ENCODE measurements at regions of chr7 and their contacts with region 1.

Region 1: GRCh38 chr7:74401137-74401859 is 52.4 kb upstream of the GTF2IRD1 start:
- DNase-seq: peak; percentile 59 to 93
- H3K4me3 ChIP-seq: no peak overlapping the region
- CTCF ChIP-seq: peak in 2 of 3 donors; percentile 16 to 94
- POLR2A ChIP-seq: no peak

Region 2: GRCh38 chr7:73638911-73639310 is 762.4 kb before region 1 on chr7:
- intact Hi-C with region 1: no loop called
- DNase-seq: no peak
- H3K4me3 ChIP-seq: no peak overlapping the region
- CTCF ChIP-seq: no peak
- POLR2A ChIP-seq: no peak

Region 3: GRCh38 chr7:73738612-73739374 is 662.5 kb before region 1 on chr7 and contains the start of gene ABHD11:
- intact Hi-C with region 1: no loop called
- DNase-seq: peak; percentile 98 to 100
- H3K4me3 ChIP-seq: peak within 1 kb of the TSS; percentile 56
- CTCF ChIP-seq: no peak
- POLR2A ChIP-seq: peak in 1 of 2 donors; percentile 48
- total RNA-seq, gene ABHD11: 24.9 to 29.0 (median 26.3) TPM

Region 4: DNA sequence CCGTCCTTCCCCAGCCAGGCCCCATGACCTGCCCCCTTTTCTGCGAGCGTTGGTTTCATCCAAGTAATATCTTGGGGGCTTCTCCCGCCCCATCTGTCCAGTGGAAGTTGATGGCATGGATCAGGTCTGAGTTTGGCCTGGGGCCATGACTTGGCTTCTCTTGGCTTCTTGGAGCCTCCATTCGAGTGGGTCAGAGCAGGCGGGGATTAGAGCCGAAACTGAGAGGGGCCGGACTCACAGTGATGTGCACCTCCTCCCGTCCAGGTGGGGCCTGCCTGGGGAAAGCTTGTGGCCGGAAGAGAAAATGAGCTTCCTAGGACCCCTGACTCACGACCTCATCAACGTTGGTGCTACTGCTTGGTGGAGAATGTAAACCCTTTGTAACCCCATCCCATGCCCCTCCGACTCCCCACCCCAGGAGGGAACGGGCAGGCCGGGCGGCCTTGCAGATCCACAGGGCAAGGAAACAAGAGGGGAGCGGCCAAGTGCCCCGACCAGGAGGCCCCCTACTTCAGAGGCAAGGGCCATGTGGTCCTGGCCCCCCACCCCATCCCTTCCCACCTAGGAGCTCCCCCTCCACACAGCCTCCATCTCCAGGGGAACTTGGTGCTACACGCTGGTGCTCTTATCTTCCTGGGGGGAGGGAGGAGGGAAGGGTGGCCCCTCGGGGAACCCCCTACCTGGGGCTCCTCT is 332.8 kb before region 1 on chr7:
- intact Hi-C with region 1: loop called (anchors 5 kb)
- DNase-seq: no peak
- H3K4me3 ChIP-seq: no peak overlapping the region
- CTCF ChIP-seq: no peak
- POLR2A ChIP-seq: no peak